HCT116 (cell line): ENCODE measurements at regions of chr12 and their contacts with region 1.

Region 1: DNA sequence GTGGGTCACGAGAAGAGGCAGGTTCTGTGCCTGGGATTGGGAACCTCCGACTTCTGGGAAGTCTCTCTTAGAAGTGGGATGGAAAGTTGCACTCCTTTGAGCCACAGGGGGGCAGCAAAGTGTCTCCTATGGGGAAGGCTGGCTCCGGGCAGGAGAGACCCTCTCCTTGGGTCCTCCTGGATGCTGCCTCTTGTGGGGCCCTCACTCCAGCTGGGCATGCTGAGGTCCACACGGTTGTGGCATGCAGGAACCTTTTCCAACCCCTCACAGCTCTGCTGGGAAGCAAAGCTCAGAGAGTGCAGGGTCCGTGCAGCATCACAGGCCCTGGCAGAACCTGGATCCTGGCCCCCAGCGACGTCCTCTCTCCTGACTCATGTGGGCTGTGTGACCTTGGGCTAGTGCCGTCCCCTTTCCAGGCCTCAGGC is 17.4 kb downstream of the SDSL start:
- DNase-seq: no peak
- ATAC-seq: peak; percentile 91
- H3K4me3 ChIP-seq: no peak overlapping the region
- H3K27ac ChIP-seq: no peak overlapping the region
- H3K4me1 ChIP-seq: no peaks in the 10 kb centered on the region
- H3K27me3 ChIP-seq: no peaks in the 10 kb centered on the region
- CTCF ChIP-seq: peak; percentile 41 to 79 (median 77); a peak in 5 of 6 replicates
- POLR2A ChIP-seq: no peak
- RAD21 ChIP-seq: peak; percentile 81

Region 2: GRCh38 chr12:113456761-113457160 is 17.1 kb after region 1 on chr12:
- CTCF ChIA-PET with region 1: interaction called, 5 read pairs
- POLR2A ChIA-PET with region 1: no interaction called
- RAD21 ChIA-PET with region 1: interaction called in 1 of 2 experiments, 10 read pairs
- intact Hi-C with region 1: no loop called
- DNase-seq: no peak
- ATAC-seq: no peak
- H3K4me3 ChIP-seq: no peak overlapping the region
- H3K27ac ChIP-seq: no peak overlapping the region
- H3K4me1 ChIP-seq: no peaks in the 10 kb centered on the region; a peak in 1 of 4 replicates
- H3K27me3 ChIP-seq: peaks cover 21% of the 10 kb centered on the region
- CTCF ChIP-seq: no peak
- POLR2A ChIP-seq: no peak
- RAD21 ChIP-seq: no peak